PC-3 (cell line): ENCODE measurements at regions of chr6 and their contacts with region 1.

Region 1: DNA sequence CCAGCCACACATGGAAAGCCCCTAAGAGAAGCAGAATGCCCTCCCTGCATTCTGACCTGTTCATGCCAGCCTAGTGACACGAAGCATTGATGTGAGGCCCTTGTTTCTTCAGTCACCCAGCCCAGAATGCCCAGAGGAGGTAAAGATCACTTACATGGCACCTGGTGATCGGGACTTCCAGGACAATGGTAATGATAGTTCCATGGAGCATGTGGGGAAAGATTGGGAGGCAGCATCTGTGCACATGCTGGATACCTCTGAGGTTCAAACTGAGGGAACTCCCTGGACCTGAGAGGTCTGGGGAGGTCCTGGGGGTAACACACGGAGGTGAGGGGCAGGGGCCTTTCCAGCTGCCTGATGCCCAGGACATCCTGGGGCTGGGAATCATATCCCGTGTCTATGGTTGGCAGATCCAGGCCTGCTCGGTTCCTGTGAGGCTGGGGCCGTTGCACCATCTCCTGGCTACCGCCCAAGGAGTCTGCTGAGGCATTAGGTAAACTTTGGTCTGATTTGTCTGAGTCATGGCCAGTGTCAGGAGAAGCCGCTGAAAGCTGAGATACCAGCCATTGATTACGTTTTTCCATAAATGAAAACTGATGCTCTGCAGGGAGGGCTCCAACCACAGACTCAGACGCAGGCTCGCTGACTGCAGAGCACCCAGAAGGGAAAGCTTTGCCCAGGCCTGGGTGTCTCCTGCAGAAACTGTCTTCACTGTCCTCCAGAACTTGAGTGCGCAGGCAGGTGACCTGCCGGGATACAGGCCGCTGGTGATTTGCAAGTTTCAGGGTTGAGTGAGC is 14.4 kb downstream of the TRAF3IP2 start:
- DNase-seq: peak; percentile 98
- ATAC-seq: peak; percentile 75
- H3K4me3 ChIP-seq: peak overlapping the region; percentile 45
- H3K27ac ChIP-seq: peak overlapping the region; percentile 93
- H3K4me1 ChIP-seq: peaks cover 59% of the 10 kb centered on the region
- H3K27me3 ChIP-seq: no peaks in the 10 kb centered on the region
- CTCF ChIP-seq: no peak

Region 2: DNA sequence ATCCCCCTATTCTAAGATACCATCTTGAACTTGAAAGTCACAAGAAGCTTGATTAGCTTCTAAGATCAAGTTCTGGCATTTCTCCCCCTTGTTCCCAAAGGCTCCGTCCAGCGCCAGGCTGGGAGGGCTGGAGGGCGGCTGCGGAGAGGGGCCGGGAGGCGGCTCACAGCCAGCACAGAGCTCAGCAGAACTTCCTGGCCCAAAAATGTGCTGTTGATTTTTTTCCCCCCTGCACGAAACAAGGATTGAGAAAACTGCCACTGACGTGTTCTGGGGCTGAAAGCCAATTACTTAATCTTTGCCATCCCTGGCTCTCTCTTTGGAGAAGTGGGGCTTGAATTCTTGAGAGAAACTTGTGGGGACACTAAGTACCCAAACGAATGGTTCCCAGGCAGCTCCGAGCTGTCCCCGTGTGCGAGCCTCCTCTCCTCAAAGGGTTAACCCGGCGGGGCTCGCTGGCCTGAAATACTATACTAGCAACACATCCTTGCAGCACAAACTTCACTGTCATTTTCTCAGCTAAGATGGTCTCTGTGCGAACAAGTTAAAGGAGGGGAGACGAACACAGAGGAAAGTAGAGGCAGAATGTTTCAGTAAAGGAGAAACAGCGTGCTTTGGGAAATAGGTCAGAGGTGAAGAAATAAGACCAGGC is 13.9 kb after region 1 on chr6:
- CTCF ChIA-PET with region 1: no interaction called
- POLR2A ChIA-PET with region 1: interaction called, 7 read pairs
- intact Hi-C with region 1: loop called (anchors 2 kb)
- DNase-seq: peak; percentile 44
- ATAC-seq: peak; percentile 56
- H3K4me3 ChIP-seq: peak overlapping the region; percentile 89
- H3K27ac ChIP-seq: peak overlapping the region; percentile 91
- H3K4me1 ChIP-seq: peaks cover 37% of the 10 kb centered on the region
- H3K27me3 ChIP-seq: no peaks in the 10 kb centered on the region
- CTCF ChIP-seq: no peak

Region 3: DNA sequence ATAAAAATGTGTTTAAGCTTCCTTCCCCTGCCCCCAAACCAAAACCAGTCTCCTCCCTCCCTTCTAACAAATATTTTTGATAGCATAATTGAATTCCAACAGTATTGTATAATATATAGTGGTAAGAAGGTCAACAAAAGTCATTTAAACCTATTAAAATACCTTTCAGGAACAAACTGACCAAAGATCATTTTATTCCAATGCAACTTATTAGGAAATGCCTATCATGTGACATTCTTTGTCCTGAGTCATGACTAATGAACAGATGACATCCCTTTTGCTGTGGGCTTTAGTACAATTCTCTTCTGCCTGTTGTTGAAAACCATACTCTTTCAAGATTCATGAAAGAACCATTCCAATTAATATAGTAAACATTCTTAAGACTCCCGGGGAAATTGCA is 65.8 kb after region 1 on chr6:
- CTCF ChIA-PET with region 1: no interaction called
- POLR2A ChIA-PET with region 1: no interaction called
- intact Hi-C with region 1: loop called (anchors 5 kb)
- DNase-seq: peak; percentile 75
- ATAC-seq: peak; percentile 55
- H3K4me3 ChIP-seq: no peak overlapping the region
- H3K27ac ChIP-seq: 0 out of 2 replicates have a peak overlapping the region, but pooled peaks have one; percentile 4
- H3K4me1 ChIP-seq: peaks cover 44% of the 10 kb centered on the region
- H3K27me3 ChIP-seq: no peaks in the 10 kb centered on the region
- CTCF ChIP-seq: no peak